Pancreas (tissue), 10 donors: ENCODE measurements at regions of chr7 and their contacts with region 1.

Region 1: GRCh38 chr7:29105752-29106668 is 40.3 kb downstream of the CPVL start:
- DNase-seq: peak in 2 of 6 donors; percentile 33 to 56
- ATAC-seq: peak; percentile 75 to 91 (median 86)
- H3K4me3 ChIP-seq: no peak overlapping the region
- H3K27ac ChIP-seq: no peak overlapping the region
- H3K4me1 ChIP-seq: peaks cover 0 to 6% (median 0%) of the 10 kb centered on the region in 3 donors
- H3K27me3 ChIP-seq: no peaks in the 10 kb centered on the region
- CTCF ChIP-seq: peak; percentile 41 to 72 (median 68)

Region 2: DNA sequence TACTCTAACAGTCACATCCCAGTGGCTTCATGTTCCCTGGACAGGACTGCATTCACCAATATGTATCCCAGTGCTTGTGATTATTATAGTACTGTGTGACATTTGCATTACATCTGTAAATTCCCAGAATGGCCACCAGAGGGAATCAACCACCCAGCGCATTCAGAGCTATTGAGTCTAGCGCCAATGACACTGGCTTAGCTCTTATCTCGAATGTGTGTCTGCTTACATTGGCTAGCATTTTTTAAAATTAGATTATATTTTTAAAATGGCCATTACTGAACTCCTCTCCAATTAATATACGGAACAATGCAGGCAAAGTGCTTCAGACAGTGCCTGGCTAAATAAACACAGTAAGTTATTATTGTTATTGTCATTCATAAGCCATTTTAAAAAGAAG is 184.2 kb before region 1 on chr7:
- intact Hi-C with region 1: loop called in 2 of 3 experiments (anchors 5 kb)
- DNase-seq: peak in 3 of 6 donors; percentile 21 to 53 (median 48)
- ATAC-seq: peak; percentile 94 to 99 (median 98)
- H3K4me3 ChIP-seq: no peak overlapping the region
- H3K27ac ChIP-seq: no peak overlapping the region
- H3K4me1 ChIP-seq: peaks cover 0 to 9% (median 6%) of the 10 kb centered on the region in 3 donors
- H3K27me3 ChIP-seq: peaks cover 0 to 5% (median 0%) of the 10 kb centered on the region in 4 donors
- CTCF ChIP-seq: peak; percentile 53 to 87 (median 74)

Region 3: DNA sequence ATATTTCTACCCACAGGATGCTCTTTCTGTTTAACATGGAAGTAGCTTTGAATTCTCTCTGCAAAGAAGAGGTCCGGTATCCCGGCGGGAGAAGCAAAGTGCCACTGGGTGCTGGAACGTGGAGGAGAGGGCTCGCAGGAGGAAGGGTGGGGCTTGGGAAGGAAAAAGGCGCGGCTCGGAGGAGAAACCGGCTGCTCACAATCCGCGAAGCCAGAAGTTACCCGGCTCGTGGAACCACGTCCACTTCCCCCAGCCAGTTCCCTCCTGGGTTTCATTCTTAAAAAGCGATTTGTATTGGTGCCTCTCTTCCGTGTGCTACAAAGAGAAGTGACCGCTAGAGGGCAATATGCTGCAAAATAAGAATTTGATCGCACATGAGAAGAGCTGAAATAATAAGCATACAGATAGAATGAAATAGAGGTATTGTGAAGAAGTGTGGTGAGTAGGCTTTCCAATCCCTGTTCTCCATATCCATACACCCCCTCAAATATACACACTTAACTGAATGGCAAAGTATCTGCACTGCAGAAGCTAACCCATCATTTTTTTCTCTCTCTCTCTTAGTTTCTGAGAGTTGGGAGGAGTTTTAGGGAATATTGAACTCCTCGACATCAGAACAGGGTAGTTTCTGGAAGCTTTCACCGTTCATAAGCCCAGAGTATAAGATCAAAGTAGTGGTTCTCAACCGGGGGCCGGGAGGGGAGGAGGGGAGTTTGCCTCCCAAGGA is 179.0 kb before region 1 on chr7:
- intact Hi-C with region 1: loop called in 2 of 3 experiments (anchors 5 kb)
- DNase-seq: peak in 5 of 6 donors; percentile 40 to 68 (median 65)
- ATAC-seq: peak; percentile 75 to 94 (median 92)
- H3K4me3 ChIP-seq: peak overlapping the region; percentile 11 to 50 (median 38)
- H3K27ac ChIP-seq: no peak overlapping the region
- H3K4me1 ChIP-seq: peaks cover 0 to 9% (median 4%) of the 10 kb centered on the region in 3 donors
- H3K27me3 ChIP-seq: peaks cover 0 to 5% (median 0%) of the 10 kb centered on the region in 4 donors
- CTCF ChIP-seq: peak; percentile 70 to 83 (median 74)

Region 4: DNA sequence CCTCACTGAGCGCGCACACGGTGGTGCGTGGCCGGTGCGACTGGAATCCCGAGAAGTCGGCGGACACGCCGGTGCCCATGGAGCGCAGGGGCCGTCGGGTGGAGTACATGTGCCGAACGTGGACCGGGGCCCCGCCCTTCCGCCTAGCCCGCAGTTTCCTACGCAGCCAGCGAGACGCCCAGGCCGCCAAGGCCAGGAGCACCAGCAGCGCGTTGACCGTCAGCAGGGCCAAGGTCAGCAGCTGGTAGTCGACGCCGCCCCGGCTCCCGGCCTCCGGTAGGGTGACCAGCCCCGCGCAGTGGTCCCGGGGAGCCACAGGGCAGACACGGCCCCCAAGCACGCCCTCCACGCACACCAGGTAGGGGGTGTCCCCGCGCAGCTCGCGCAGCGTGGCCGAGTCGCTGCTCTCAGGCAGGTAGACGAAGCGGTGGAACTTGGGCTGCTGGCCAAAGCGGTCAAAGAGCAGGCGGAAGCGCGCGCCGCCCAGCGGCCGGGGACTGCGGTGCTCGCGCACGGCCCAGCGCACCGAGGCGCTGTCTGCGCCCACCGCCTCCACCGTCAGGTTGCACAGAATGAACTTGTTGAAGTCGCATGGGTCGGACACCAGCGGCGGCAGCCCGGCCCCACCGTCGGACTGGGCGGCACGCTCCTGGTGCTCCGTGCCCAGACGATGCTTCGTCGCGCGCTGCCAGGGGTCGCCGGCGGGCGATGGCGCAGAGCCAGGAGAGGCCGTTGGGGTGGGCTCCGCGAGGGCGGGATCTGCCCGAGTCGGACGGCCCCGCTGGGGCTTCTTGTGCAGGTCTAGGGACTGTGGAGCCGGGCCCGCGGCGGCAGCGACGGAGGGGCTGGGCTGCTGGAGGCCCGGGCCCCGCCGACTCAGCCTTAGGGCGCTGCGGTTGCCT is 150.0 kb before region 1 on chr7:
- intact Hi-C with region 1: loop called in 1 of 3 experiments (anchors 10 kb)
- DNase-seq: peak; percentile 79 to 96 (median 92)
- ATAC-seq: peak; percentile 83 to 90 (median 88)
- H3K4me3 ChIP-seq: peak overlapping the region; percentile 21 to 64 (median 52)
- H3K27ac ChIP-seq: peak overlapping the region in 3 of 4 donors; percentile 17 to 42 (median 39)
- H3K4me1 ChIP-seq: peaks cover 0 to 6% (median 5%) of the 10 kb centered on the region in 3 donors
- H3K27me3 ChIP-seq: no peaks in the 10 kb centered on the region
- CTCF ChIP-seq: peak; percentile 68 to 75 (median 71)

Region 5: GRCh38 chr7:29071203-29071874 is 34.7 kb before region 1 on chr7:
- intact Hi-C with region 1: no loop called
- DNase-seq: no peak
- ATAC-seq: no peak
- H3K4me3 ChIP-seq: no peak overlapping the region
- H3K27ac ChIP-seq: no peak overlapping the region
- H3K4me1 ChIP-seq: no peaks in the 10 kb centered on the region
- H3K27me3 ChIP-seq: no peaks in the 10 kb centered on the region
- CTCF ChIP-seq: no peak